ENCODE measurements at regions of chr15 and their contacts with region 1.

Region 1: DNA sequence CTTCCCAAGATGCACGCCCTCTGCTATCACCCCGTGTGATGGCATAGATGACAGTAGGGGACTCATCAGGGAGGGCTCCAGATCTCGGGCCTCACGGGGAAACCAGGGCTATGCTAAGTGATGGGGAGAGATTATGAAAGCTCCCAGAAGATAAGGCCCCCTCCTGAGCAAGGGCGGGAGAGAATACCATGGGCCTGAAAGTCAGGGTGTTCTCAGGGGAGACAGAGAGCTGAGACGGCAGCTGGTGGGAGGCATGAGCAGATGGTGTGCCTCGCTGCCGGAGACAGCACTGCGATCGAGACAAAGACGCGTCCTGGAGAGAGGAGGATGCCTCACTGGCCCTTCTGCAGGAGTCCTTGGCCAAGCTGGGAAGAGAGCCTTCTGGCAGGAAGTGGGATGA is 106.5 kb upstream of the ADPGK start:
- DNase-seq: no peak
- H3K4me3 ChIP-seq: no peak overlapping the region
- H3K27ac ChIP-seq: no peak overlapping the region
- H3K4me1 ChIP-seq: no peaks in the 10 kb centered on the region
- CTCF ChIP-seq: no peak

Region 2: GRCh38 chr15:72341361-72341760 is 548.7 kb before region 1 on chr15:
- CTCF ChIA-PET with region 1: no interaction called
- POLR2A ChIA-PET with region 1: no interaction called
- intact Hi-C with region 1: no loop called
- DNase-seq: no peak
- H3K4me3 ChIP-seq: no peak overlapping the region
- H3K27ac ChIP-seq: no peak overlapping the region
- H3K4me1 ChIP-seq: no peaks in the 10 kb centered on the region
- CTCF ChIP-seq: 0 out of 2 replicates have a peak, but pooled peaks have one; percentile 15

Region 3: GRCh38 chr15:72722071-72722696 is 167.9 kb before region 1 on chr15:
- CTCF ChIA-PET with region 1: no interaction called
- POLR2A ChIA-PET with region 1: interaction called, 3 read pairs
- intact Hi-C with region 1: loop called (anchors 10 kb)
- DNase-seq: peak; percentile 69
- H3K4me3 ChIP-seq: no peak overlapping the region
- H3K27ac ChIP-seq: no peak overlapping the region
- H3K4me1 ChIP-seq: no peaks in the 10 kb centered on the region
- CTCF ChIP-seq: peak; percentile 96

Region 4: GRCh38 chr15:72998681-72999466 is 108.8 kb after region 1 on chr15:
- CTCF ChIA-PET with region 1: no interaction called
- POLR2A ChIA-PET with region 1: no interaction called
- intact Hi-C with region 1: no loop called
- DNase-seq: no peak
- H3K4me3 ChIP-seq: no peak overlapping the region
- H3K27ac ChIP-seq: no peak overlapping the region
- H3K4me1 ChIP-seq: no peaks in the 10 kb centered on the region
- CTCF ChIP-seq: no peak

Measured in OCI-LY7 (cell line).